Left cardiac atrium (tissue), 4 donors: ENCODE measurements at regions of chr2 and their contacts with region 1.

Region 1: GRCh38 chr2:68362069-68362468 is 3.0 kb upstream of the PLEK start:
- DNase-seq: peak; percentile 84
- ATAC-seq: peak; percentile 65 to 79

Region 2: GRCh38 chr2:68434981-68435380 is 72.9 kb after region 1 on chr2:
- intact Hi-C with region 1: loop called (anchors 5 kb)
- DNase-seq: no peak
- ATAC-seq: peak in 1 of 2 donors; percentile 15

Region 3: GRCh38 chr2:68441179-68441993 is 79.3 kb after region 1 on chr2:
- intact Hi-C with region 1: loop called (anchors 5 kb)
- DNase-seq: peak; percentile 84
- ATAC-seq: peak; percentile 92 to 93

Region 4: GRCh38 chr2:68673631-68674030 is 311.6 kb after region 1 on chr2:
- intact Hi-C with region 1: no loop called
- DNase-seq: no peak
- ATAC-seq: no peak